ENCODE measurements at regions of chr1 and their contacts with region 1.

Region 1: DNA sequence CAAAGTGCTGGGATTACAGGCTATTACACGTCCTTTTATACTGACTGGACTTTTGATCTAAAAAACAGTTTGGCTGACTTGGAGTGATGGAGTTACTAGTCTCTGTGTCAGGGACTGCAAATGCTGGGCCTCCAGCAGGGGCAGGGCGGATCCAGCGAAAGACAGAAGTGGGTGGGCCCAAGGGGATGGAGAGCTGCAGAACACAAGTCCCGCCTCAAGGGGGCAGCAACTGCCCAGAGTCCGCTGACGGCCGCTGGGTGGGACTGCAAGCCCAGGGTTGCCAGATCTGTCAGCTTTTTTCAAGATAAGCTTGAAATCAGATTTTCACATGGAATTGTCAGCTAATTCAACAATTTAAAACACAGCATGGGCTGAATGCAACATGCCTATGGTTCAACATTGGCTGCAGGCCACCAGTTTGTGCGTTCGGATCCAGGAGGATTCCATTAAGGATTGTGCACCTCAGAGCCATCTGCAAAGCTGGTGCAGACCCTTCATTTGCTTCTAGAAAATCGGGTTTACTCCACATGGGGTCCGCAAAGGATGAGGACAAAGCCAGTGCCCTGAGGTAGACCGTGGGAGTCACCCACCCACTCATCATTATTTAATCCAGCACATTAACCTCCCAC is 10.7 kb downstream of the STMN1 start:
- DNase-seq: peak; percentile 86
- H3K4me3 ChIP-seq: no peak overlapping the region
- H3K27ac ChIP-seq: peak overlapping the region; percentile 47
- H3K27me3 ChIP-seq: no peaks in the 10 kb centered on the region
- CTCF ChIP-seq: peak; percentile 99

Region 2: DNA sequence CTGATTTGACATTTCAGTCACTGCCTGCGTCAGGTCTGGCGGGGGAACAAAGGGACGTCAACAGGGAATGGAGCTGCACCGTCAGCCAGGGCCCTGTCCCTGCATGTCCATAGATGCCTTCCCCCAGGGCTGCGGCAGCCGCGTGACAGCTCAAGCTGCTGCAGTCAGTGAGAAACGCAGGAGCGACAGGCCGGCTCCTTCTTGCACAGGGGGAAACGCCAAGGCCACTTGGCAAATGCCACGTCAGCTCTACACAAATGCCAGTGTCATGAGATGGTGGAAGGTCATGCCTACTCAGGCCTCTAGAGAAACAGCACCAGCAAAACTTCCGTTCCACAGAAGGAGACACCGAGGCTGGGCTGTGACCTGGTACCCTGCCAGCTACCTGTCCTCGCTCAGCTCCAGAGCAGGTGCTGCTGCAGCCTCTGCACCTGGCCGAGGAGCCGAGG is 700.9 kb before region 1 on chr1:
- CTCF ChIA-PET with region 1: no interaction called
- POLR2A ChIA-PET with region 1: no interaction called
- DNase-seq: no peak
- H3K4me3 ChIP-seq: no peak overlapping the region
- H3K27ac ChIP-seq: no peak overlapping the region
- H3K27me3 ChIP-seq: peaks cover 46% of the 10 kb centered on the region
- CTCF ChIP-seq: no peak

Region 3: GRCh38 chr1:25874934-25875855 is 20.3 kb before region 1 on chr1 and contains the start of gene PAQR7:
- CTCF ChIA-PET with region 1: interaction called, 10 read pairs
- POLR2A ChIA-PET with region 1: interaction called, 9 read pairs
- DNase-seq: no peak
- H3K4me3 ChIP-seq: peak within 1 kb of the TSS; percentile 69
- H3K27ac ChIP-seq: peak within 1 kb of the TSS; percentile 65
- H3K27me3 ChIP-seq: peaks cover 3% of the 10 kb centered on the region
- CTCF ChIP-seq: 0 out of 2 replicates have a peak, but pooled peaks have one; percentile 22
- polyA plus RNA-seq, gene PAQR7: 10.7 and 11.9 TPM in 2 replicates

Region 4: GRCh38 chr1:25914074-25914995 is 18.9 kb after region 1 on chr1:
- CTCF ChIA-PET with region 1: interaction called, 14 read pairs
- POLR2A ChIA-PET with region 1: interaction called, 5 read pairs
- DNase-seq: no peak
- H3K4me3 ChIP-seq: no peak overlapping the region
- H3K27ac ChIP-seq: no peak overlapping the region
- H3K27me3 ChIP-seq: no peaks in the 10 kb centered on the region
- CTCF ChIP-seq: no peak

Region 5: GRCh38 chr1:25922056-25922969 is 26.8 kb after region 1 on chr1:
- CTCF ChIA-PET with region 1: interaction called, 10 read pairs
- POLR2A ChIA-PET with region 1: interaction called, 5 read pairs
- DNase-seq: no peak
- H3K4me3 ChIP-seq: peak overlapping the region; percentile 59
- H3K27ac ChIP-seq: no peak overlapping the region
- H3K27me3 ChIP-seq: peaks cover 4% of the 10 kb centered on the region
- CTCF ChIP-seq: no peak

Region 6: DNA sequence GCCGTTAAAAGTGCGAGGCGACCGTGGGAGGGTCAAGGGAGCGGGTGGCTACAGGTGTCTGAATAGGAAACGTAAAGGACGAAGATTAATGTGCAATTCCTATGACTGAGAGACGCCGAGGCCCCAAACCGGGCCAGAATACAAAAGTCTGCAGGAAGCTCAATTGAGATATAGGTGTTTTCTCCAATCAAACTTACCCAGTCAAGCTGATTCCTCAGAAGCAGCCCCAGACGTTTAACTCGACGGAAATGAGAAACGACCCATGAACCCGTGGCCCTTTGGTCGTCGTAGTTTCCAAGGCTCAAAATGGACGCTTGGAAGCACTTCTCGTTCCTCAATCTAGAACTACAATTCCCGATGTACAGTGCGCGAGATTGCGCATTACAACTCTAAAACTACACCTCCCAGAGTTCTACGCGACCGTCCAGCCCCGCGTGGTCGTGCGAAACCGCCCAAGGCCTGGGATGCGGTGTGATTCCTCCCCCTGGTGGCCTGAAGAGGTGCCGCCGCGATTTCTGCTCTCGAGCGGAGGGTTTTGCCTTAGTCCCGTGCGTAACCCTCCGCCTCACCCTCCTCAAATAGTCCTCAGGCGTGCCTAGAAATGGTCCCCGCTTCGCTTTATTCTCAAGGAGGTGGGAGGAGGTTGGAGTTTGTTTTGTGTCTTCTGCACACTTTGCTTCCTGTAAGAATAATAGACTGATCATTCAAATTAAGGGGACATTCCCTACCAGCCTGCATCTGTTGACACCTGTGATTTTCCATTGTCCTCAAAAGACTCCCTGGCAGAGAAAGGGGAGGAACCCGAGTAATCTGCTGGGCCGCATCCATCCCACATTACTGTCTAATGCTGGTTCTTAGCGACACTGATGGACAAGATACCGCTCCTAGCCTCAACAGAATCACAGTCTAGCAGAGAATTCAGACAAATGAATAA is 102.6 kb after region 1 on chr1 and contains the start of gene PAFAH2:
- CTCF ChIA-PET with region 1: interaction called, 214 read pairs
- POLR2A ChIA-PET with region 1: interaction called, 12 read pairs
- DNase-seq: peak; percentile 99
- H3K4me3 ChIP-seq: peak within 1 kb of the TSS; percentile 71
- H3K27ac ChIP-seq: peak within 1 kb of the TSS; percentile 63
- H3K27me3 ChIP-seq: no peaks in the 10 kb centered on the region
- CTCF ChIP-seq: peak; percentile 98
- polyA plus RNA-seq, gene PAFAH2: 9.3 and 11.8 TPM in 2 replicates

Region 7: DNA sequence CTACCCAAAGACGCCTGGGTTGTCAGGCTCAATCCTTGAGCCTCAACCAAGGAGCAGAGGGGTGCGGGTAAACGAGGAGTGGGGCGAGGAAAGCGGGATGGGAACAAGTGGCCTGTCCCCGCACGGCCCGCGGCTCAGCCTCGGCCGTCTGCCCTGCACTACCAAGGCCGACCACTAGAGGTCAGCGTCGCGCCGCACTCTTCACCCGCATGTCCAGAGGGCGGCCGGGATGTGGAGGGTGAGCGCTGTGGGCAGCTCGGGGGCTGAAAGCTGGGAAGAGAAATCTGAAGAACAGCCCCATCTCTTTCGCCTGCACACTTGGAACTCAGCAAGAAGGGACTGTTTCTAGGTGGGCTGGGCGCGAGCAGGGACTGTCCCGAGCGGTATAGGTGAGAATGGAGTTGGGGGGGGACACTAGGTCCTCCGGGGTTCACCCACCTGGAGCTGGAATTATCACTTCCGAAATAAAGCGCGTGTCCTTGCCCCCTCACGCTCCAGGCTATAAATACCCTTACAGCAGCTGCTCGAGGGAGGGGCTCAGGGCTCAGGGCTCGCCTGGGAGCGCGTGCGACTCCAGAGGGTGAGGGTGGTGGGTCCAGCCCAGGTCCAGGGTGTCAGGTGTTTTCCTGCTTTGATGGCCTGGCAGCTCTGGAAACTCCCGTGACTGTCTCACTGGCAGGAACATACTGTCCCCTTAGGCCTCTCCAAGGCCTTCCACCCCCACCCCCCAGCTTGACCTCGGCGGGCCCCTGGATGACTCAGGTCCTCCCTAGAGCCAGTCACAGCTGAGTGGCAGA is 140.7 kb after region 1 on chr1:
- CTCF ChIA-PET with region 1: interaction called, 25 read pairs
- POLR2A ChIA-PET with region 1: no interaction called
- DNase-seq: peak; percentile 23
- H3K4me3 ChIP-seq: peak overlapping the region; percentile 85
- H3K27ac ChIP-seq: no peak overlapping the region
- H3K27me3 ChIP-seq: peaks cover 12% of the 10 kb centered on the region
- CTCF ChIP-seq: peak; percentile 95

Region 8: DNA sequence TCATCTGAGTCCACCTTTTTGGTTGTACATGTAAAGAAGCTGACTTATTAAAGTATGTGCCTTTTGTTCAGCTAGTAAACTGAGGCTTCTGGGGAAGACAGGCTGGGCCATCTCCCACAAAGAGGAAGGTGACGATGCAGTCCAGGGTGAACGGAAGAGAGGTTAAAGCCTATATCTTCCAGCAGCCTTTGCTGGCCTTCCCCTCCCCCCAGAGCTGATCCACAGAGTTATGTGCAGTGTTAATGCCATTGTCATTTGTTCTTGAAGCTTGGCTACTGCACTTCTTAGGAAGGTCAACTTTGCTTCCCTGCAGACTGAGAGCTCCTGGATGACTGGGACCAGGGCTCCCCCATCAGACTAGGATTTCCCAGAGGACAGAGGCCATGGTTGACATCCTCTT is 148.3 kb after region 1 on chr1:
- CTCF ChIA-PET with region 1: no interaction called
- POLR2A ChIA-PET with region 1: interaction called, 12 read pairs
- DNase-seq: no peak
- H3K4me3 ChIP-seq: no peak overlapping the region
- H3K27ac ChIP-seq: no peak overlapping the region
- H3K27me3 ChIP-seq: peaks cover 73% of the 10 kb centered on the region
- CTCF ChIP-seq: no peak

Measured in AG04450 (cell line).